ENCODE measurements at regions of chr15 and their contacts with region 1.

Region 1: GRCh38 chr15:98850961-98851573 is 156.5 kb downstream of the PGPEP1L start:
- DNase-seq: peak; percentile 63
- H3K4me3 Mint-ChIP-seq: peak overlapping the region; percentile 76
- H3K27ac Mint-ChIP-seq: peak overlapping the region; percentile 74
- H3K4me1 Mint-ChIP-seq: peaks cover 27% of the 10 kb centered on the region
- H3K27me3 Mint-ChIP-seq: no peaks in the 10 kb centered on the region
- CTCF ChIP-seq: peak; percentile 24

Region 2: GRCh38 chr15:98800437-98801233 is 50.4 kb before region 1 on chr15:
- CTCF ChIA-PET with region 1: interaction called, 3 read pairs
- POLR2A ChIA-PET with region 1: interaction called, 11 read pairs
- intact Hi-C with region 1: no loop called
- DNase-seq: peak; percentile 60
- H3K4me3 Mint-ChIP-seq: peak overlapping the region; percentile 52
- H3K27ac Mint-ChIP-seq: peak overlapping the region; percentile 2
- H3K4me1 Mint-ChIP-seq: peaks cover 25% of the 10 kb centered on the region
- H3K27me3 Mint-ChIP-seq: no peaks in the 10 kb centered on the region
- CTCF ChIP-seq: no peak

Region 3: GRCh38 chr15:98865397-98866339 is 14.6 kb after region 1 on chr15:
- CTCF ChIA-PET with region 1: interaction called, 5 read pairs
- POLR2A ChIA-PET with region 1: interaction called, 11 read pairs
- intact Hi-C with region 1: no loop called
- DNase-seq: peak; percentile 84
- H3K4me3 Mint-ChIP-seq: peak overlapping the region; percentile 74
- H3K27ac Mint-ChIP-seq: peak overlapping the region; percentile 96
- H3K4me1 Mint-ChIP-seq: peaks cover 29% of the 10 kb centered on the region
- H3K27me3 Mint-ChIP-seq: no peaks in the 10 kb centered on the region
- CTCF ChIP-seq: no peak

Region 4: GRCh38 chr15:99059010-99059981 is 208.2 kb after region 1 on chr15:
- CTCF ChIA-PET with region 1: no interaction called
- POLR2A ChIA-PET with region 1: interaction called, 6 read pairs
- intact Hi-C with region 1: loop called (anchors 1 kb)
- DNase-seq: peak; percentile 50
- H3K4me3 Mint-ChIP-seq: peak overlapping the region; percentile 63
- H3K27ac Mint-ChIP-seq: no peak overlapping the region
- H3K4me1 Mint-ChIP-seq: no peaks in the 10 kb centered on the region
- H3K27me3 Mint-ChIP-seq: peaks cover 30% of the 10 kb centered on the region
- CTCF ChIP-seq: peak; percentile 81

Measured in MCF 10A (cell line).